ENCODE measurements at regions of chr21 and their contacts with region 1.

Region 1: GRCh38 chr21:36319765-36320420 is at the start of gene MORC3:
- DNase-seq: peak; percentile 96 to 99
- ATAC-seq: peak; percentile 91
- total RNA-seq, gene MORC3: 23.4 to 29.7 TPM

Region 2: DNA sequence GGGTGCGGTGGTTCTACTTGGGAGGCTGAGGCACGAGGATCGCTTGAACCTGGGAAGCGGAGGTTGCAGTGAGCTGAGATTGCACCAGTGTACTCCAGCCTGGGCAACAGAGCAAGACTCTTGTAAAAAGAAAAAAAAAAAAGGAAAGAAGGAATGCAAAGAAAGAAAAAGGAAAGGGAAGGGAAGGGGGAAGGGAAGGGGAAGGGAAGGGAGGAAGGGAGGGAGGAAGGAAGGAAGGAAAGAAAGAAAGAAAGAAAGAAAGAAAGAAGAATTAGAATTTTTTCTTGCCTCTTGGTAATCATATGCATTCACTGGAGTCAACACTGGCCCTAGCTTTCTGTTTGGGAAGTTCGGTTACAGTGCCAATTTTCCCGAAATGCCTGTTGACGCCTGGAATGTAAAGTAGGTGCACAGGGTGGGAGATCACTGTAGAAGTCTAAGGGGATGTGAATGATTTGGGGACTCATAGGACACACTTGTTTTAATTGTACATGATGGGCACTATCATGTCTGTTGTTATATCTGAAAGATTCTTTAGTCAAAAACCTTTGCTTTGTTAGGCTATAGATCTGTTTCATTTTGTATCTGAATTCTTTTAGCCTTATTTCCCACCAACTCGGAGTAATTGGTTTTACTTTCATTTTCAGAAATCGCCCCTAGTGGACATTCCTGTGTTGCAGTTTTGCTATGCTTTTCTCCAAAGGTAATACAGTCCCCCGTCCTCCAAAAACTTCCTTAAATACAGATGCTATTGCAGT is 59.7 kb before region 1 on chr21:
- intact Hi-C with region 1: loop called in 1 of 2 experiments (anchors 10 kb)
- DNase-seq: peak in 1 of 2 donors; percentile 35
- ATAC-seq: peak; percentile 85

Measured in left colon (tissue), 2 donors.